GM12878 (cell line): ENCODE measurements at regions of chr13 and their contacts with region 1.

Region 1: DNA sequence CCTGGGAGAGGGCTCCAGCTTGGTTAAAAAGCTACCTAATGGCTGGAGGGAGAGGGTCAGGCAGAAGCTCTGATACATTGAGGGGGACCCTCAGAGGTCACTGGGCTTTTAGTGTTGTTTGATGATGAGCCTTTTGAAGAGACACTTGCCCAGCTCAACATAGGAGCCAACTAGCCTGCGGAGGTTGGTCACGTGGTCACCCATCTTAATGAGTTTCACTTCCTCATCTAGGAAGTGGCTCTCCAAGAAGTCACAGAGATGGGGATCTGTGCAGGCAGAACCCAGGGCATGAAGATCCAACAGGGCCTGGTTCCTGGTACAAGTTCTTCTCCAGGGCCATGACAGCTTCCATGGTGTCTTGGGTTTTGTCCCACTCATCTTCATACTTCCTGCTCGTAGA is 33.4 kb downstream of the IPO5 start:
- DNase-seq: peak; percentile 32
- ATAC-seq: peak; percentile 95
- H3K4me3 ChIP-seq: no peak overlapping the region
- H3K27ac ChIP-seq: no peak overlapping the region; the same call in 1 of the 2 replicates
- H3K4me1 ChIP-seq: peaks cover 5% of the 10 kb centered on the region
- H3K27me3 ChIP-seq: no peaks in the 10 kb centered on the region
- CTCF ChIP-seq: no peak
- EP300 ChIP-seq: no peak
- POLR2A ChIP-seq: no peak
- RAD21 ChIP-seq: no peak

Region 2: DNA sequence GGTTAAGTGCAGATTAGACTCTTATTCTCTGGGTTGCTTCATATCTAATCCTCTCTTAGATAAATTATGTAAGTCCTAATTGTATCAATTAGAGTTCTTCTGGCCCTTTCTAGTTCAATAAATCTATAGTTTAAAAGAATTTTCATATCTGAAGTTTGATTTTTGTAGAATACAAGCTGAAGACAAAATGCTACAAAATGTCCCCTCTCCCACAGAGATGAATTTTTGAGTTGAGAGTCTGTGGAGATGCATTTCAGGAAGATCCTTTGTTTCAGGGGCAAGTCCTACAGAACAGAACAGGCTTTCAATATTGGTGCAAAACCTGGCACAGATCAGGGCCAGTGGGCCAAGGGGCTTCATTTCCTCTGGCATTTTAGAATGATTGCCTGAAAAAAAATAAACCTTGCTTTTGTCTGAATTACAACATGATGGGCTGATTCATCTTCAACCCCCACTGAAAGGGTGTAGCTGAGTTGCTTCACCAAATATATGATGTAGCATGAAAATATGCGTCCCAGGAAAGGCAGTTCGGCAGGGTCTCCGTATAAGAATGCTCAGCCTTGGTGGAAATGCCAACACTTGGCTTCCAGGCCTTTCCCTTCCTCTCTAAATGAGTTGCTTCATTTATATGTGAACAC is 39.8 kb before region 1 on chr13:
- CTCF ChIA-PET with region 1: no interaction called
- POLR2A ChIA-PET with region 1: no interaction called
- RAD21 ChIA-PET with region 1: no interaction called
- SMC1A ChIA-PET with region 1: no interaction called
- in situ Hi-C with region 1: no loop called
- intact Hi-C with region 1: no loop called
- DNase-seq: no peak
- ATAC-seq: no peak
- H3K4me3 ChIP-seq: no peak overlapping the region
- H3K27ac ChIP-seq: no peak overlapping the region
- H3K4me1 ChIP-seq: no peaks in the 10 kb centered on the region
- H3K27me3 ChIP-seq: no peaks in the 10 kb centered on the region
- CTCF ChIP-seq: no peak
- EP300 ChIP-seq: no peak
- POLR2A ChIP-seq: no peak
- RAD21 ChIP-seq: no peak

Region 3: GRCh38 chr13:97975848-97976609 is 10.8 kb before region 1 on chr13:
- CTCF ChIA-PET with region 1: no interaction called
- POLR2A ChIA-PET with region 1: interaction called, 5 read pairs
- RAD21 ChIA-PET with region 1: interaction called, 10 read pairs
- SMC1A ChIA-PET with region 1: interaction called, 3 read pairs
- in situ Hi-C with region 1: no loop called
- intact Hi-C with region 1: no loop called
- DNase-seq: no peak
- ATAC-seq: peak; percentile 94
- H3K4me3 ChIP-seq: peak overlapping the region; percentile 81
- H3K27ac ChIP-seq: peak overlapping the region; percentile 82
- H3K4me1 ChIP-seq: peaks cover 3% of the 10 kb centered on the region; the same call in 1 of the 2 replicates
- H3K27me3 ChIP-seq: no peaks in the 10 kb centered on the region
- CTCF ChIP-seq: no peak
- EP300 ChIP-seq: no peak
- POLR2A ChIP-seq: peak; percentile 85
- RAD21 ChIP-seq: no peak